Thyroid gland (tissue), 4 donors: ENCODE measurements at regions of chr10 and their contacts with region 1.

Region 1: GRCh38 chr10:32256613-32257437 is 90.1 kb downstream of the EPC1 start:
- DNase-seq: peak; percentile 55 to 66
- H3K4me3 ChIP-seq: no peak overlapping the region
- H3K27ac ChIP-seq: no peak overlapping the region
- H3K4me1 ChIP-seq: no peaks in the 10 kb centered on the region
- H3K27me3 ChIP-seq: no peaks in the 10 kb centered on the region
- CTCF ChIP-seq: peak; percentile 77 to 88 (median 86)
- POLR2A ChIP-seq: no peak

Region 2: GRCh38 chr10:32149252-32149955 is 107.4 kb before region 1 on chr10:
- intact Hi-C with region 1: no loop called
- DNase-seq: peak; percentile 6 to 9
- H3K4me3 ChIP-seq: no peak overlapping the region
- H3K27ac ChIP-seq: no peak overlapping the region
- H3K4me1 ChIP-seq: no peaks in the 10 kb centered on the region
- H3K27me3 ChIP-seq: no peaks in the 10 kb centered on the region
- CTCF ChIP-seq: no peak
- POLR2A ChIP-seq: no peak

Region 3: GRCh38 chr10:32346134-32346550 is 89.3 kb after region 1 on chr10:
- intact Hi-C with region 1: loop called (anchors 2 kb)
- DNase-seq: peak; percentile 96 to 97
- H3K4me3 ChIP-seq: peak overlapping the region; percentile 60 to 98 (median 89)
- H3K27ac ChIP-seq: peak overlapping the region; percentile 100
- H3K4me1 ChIP-seq: peaks cover 34 to 41% of the 10 kb centered on the region in 2 donors
- H3K27me3 ChIP-seq: no peaks in the 10 kb centered on the region
- CTCF ChIP-seq: peak; percentile 77 to 99 (median 96)
- POLR2A ChIP-seq: peak in 1 of 2 donors; percentile 23

Region 4: GRCh38 chr10:32367793-32368453 is 111.1 kb after region 1 on chr10:
- intact Hi-C with region 1: loop called (anchors 5 kb)
- DNase-seq: peak; percentile 62 to 76
- H3K4me3 ChIP-seq: no peak overlapping the region
- H3K27ac ChIP-seq: peak overlapping the region in 1 of 3 donors; percentile 47
- H3K4me1 ChIP-seq: peaks cover 7 to 29% of the 10 kb centered on the region in 2 donors
- H3K27me3 ChIP-seq: no peaks in the 10 kb centered on the region
- CTCF ChIP-seq: peak; percentile 47 to 84 (median 70)
- POLR2A ChIP-seq: no peak